ENCODE measurements at regions of chr10 and their contacts with region 1.

Region 1: DNA sequence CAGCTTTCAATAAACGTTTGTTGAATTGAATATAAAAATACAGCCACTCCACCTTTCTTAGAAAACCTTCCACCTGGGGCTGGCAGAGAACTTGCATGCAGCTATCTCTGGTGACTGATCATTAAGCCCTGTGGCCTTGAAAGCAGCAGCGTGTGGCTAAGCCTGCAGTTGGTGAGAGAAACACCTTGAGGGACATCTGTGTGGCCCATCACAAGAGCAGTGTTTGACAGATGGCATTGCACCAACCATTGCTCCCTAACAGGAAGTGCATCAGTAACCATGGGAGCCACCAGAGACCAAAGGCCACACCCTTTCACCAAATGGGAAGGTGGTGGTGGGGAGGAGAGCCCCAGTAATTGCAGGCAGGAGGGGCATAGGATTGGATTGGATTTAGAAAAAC is 22.4 kb downstream of the RHOBTB1 start:
- DNase-seq: no peak
- H3K4me3 ChIP-seq: no peak overlapping the region
- H3K27ac ChIP-seq: no peak overlapping the region
- H3K4me1 ChIP-seq: peaks cover 0 to 5% (median 2%) of the 10 kb centered on the region in 4 donors
- H3K27me3 ChIP-seq: no peaks in the 10 kb centered on the region
- CTCF ChIP-seq: no peak
- EP300 ChIP-seq: no peak
- POLR2A ChIP-seq: no peak

Region 2: DNA sequence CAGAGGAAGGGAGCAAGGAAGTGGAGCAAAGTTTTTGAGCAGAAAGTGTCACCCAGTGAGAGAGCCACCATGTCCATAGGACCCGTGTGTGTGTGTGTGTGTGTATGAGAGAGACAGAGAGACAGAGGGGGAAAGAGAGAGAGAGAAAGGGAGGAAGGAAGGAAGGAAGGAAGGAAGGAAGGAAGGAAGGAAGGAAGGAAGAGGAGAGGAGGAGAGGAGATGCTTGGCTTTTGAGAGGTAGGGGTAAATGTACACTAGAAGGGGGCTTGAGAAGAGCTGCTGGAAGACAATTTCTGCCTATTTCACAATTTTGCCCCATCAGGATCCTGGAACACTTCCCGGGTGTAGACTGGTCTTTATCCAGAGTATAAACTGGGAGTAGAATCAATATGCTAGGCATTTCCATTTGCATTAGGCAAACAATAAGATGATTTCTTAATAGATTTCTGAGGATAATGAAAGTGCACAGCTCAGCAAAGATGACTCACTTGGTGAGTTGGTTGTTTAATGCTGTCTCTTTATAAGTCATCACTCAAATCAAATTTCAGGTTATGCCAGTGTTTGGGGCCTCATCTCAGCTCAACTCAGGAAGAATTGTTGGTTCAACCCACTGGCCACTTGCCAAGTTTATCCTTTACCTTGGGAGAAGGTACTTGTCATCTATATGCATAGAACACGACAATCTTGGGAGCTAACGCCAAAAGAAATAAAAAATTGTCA is 1489.3 kb before region 1 on chr10:
- in situ Hi-C with region 1: no loop called
- intact Hi-C with region 1: no loop called
- DNase-seq: no peak
- H3K4me3 ChIP-seq: no peak overlapping the region
- H3K27ac ChIP-seq: no peak overlapping the region
- H3K4me1 ChIP-seq: peaks cover 0 to 3% (median 0%) of the 10 kb centered on the region in 4 donors
- H3K27me3 ChIP-seq: no peaks in the 10 kb centered on the region
- CTCF ChIP-seq: no peak
- EP300 ChIP-seq: no peak
- POLR2A ChIP-seq: no peak

Region 3: GRCh38 chr10:59493017-59493416 is 1428.6 kb before region 1 on chr10:
- in situ Hi-C with region 1: no loop called
- intact Hi-C with region 1: no loop called
- DNase-seq: no peak
- H3K4me3 ChIP-seq: no peak overlapping the region
- H3K27ac ChIP-seq: no peak overlapping the region
- H3K4me1 ChIP-seq: no peaks in the 10 kb centered on the region
- H3K27me3 ChIP-seq: no peaks in the 10 kb centered on the region
- CTCF ChIP-seq: no peak
- EP300 ChIP-seq: no peak
- POLR2A ChIP-seq: no peak

Region 4: DNA sequence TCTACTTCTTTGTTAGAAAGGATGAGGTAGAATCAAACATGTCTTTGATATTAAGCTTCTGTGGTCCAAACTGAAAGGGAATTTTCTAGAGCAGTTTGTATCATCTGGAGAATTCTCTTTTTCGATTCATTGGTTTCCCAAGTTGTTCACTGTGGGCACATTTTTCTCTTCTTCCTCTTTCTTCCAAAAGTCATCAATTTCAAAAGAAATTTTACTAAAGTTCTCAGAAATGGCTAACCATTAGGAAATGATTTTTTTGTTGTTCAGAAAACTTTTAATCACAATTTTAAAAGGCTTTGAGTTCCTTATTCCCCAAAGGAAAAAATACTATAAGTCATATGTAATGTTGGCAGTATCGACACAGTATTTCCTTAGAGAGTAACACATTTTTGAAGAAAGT is 986.9 kb before region 1 on chr10:
- in situ Hi-C with region 1: no loop called
- intact Hi-C with region 1: loop called (anchors 5 kb)
- DNase-seq: no peak
- H3K4me3 ChIP-seq: no peak overlapping the region
- H3K27ac ChIP-seq: no peak overlapping the region
- H3K4me1 ChIP-seq: no peaks in the 10 kb centered on the region
- H3K27me3 ChIP-seq: no peaks in the 10 kb centered on the region
- CTCF ChIP-seq: no peak
- EP300 ChIP-seq: no peak
- POLR2A ChIP-seq: no peak

Region 5: GRCh38 chr10:62726142-62726541 is 1804.5 kb after region 1 on chr10:
- in situ Hi-C with region 1: no loop called
- intact Hi-C with region 1: no loop called
- DNase-seq: no peak
- H3K4me3 ChIP-seq: no peak overlapping the region
- H3K27ac ChIP-seq: no peak overlapping the region
- H3K4me1 ChIP-seq: no peaks in the 10 kb centered on the region
- H3K27me3 ChIP-seq: no peaks in the 10 kb centered on the region
- CTCF ChIP-seq: no peak
- EP300 ChIP-seq: no peak
- POLR2A ChIP-seq: no peak